A549 (cell line): ENCODE measurements at regions of chr15 and their contacts with region 1.

Region 1: GRCh38 chr15:56869573-56869972 is 48.9 kb upstream of the TCF12 start:
- DNase-seq: peak in 1 of 2 experiments; percentile 61
- ATAC-seq: peak; percentile 28 to 52; a peak in 2 of 6 replicates
- H3K4me3 ChIP-seq: no peak overlapping the region
- H3K27ac ChIP-seq: no peak overlapping the region
- H3K4me1 ChIP-seq: peaks cover 15% of the 10 kb centered on the region
- CTCF ChIP-seq: peak; percentile 72
- EP300 ChIP-seq: no peak
- POLR2A ChIP-seq: no peak
- RAD21 ChIP-seq: peak; percentile 73 to 77

Region 2: GRCh38 chr15:56856934-56857333 is 12.6 kb before region 1 on chr15:
- CTCF ChIA-PET with region 1: interaction called, 19 read pairs
- POLR2A ChIA-PET with region 1: no interaction called
- DNase-seq: no peak
- ATAC-seq: no peak
- H3K4me3 ChIP-seq: no peak overlapping the region
- H3K27ac ChIP-seq: no peak overlapping the region
- H3K4me1 ChIP-seq: peaks cover 15% of the 10 kb centered on the region
- CTCF ChIP-seq: no peak
- EP300 ChIP-seq: no peak
- POLR2A ChIP-seq: no peak
- RAD21 ChIP-seq: no peak